Right ventricle myocardium inferior (tissue), 1 donor: ENCODE measurements at regions of chr15 and their contacts with region 1.

Region 1: DNA sequence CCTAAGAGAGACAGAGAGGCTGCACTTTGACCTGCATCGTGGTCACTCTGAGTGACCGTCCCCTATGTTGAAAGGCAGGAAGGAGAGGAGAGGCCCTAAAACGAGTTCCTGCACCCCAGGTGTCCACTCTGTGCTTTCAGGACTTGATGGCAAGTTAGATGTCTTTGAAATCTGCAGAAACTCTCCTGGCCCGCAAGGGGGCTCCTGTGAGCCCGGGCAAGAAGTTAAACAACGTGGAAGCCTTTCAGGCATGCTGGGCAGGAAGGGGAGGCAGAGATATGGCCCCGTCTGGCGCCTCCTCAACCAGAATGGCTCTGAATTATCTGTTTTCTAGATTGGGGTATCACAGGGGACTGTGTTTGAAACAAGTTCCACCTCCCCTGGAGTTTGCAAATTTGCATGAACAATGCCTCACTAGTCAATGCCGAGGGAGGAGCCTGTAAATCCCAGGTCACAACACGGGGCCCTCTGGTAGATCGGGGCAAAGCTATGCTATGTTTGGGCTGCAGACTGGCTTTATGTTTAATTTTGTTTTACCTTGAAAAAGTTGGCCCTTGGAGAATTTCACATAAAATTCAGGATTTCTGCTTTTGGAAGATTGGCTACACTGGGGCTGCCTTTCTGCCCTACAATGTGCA is 9.8 kb downstream of the CTXND1 start:
- DNase-seq: no peak
- ATAC-seq: peak; percentile 17

Region 2: GRCh38 chr15:80289528-80290495 is 47.6 kb after region 1 on chr15:
- intact Hi-C with region 1: loop called (anchors 5 kb)
- DNase-seq: no peak
- ATAC-seq: no peak

Region 3: DNA sequence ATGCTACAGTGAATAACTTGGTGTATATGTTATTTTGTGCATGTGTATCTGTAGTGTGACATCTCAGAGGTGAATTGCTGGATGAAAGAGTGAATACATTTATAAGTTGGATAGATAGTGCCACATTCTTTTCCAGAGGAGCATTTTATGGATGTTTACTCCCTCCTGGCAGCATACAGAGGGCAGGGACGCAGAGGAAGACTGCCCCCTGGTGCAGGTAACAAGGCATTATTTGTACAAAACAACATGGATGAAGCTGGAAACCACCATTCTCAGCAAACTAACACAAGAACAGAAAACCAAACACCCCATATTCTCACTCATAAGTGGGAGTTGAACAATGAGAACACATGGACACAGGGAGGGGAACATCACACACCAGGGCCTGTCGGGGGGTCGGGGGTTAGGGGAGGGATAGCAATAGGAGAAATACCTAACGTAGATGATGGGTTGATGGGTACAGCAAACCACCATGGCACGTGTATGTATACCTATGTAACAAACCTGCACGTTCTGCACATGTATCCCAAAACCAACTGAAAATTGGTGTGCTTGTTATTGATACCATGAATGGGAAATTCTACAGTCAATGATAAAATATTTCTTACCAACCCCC is 67.6 kb after region 1 on chr15:
- intact Hi-C with region 1: loop called (anchors 2 kb)
- DNase-seq: no peak
- ATAC-seq: peak; percentile 31